Mammary epithelial cell (primary cell): ENCODE measurements at regions of chr1 and their contacts with region 1.

Region 1: GRCh38 chr1:205485338-205486228 is 18.9 kb upstream of the CDK18 start:
- DNase-seq: peak; percentile 56
- H3K4me3 ChIP-seq: no peak overlapping the region
- H3K27ac ChIP-seq: no peak overlapping the region
- H3K4me1 ChIP-seq: peaks cover 16% of the 10 kb centered on the region
- H3K27me3 ChIP-seq: no peaks in the 10 kb centered on the region
- CTCF ChIP-seq: peak; percentile 76 to 96

Region 2: GRCh38 chr1:205335643-205336091 is 149.9 kb before region 1 on chr1:
- CTCF ChIA-PET with region 1: interaction called, 8 read pairs
- dilution Hi-C with region 1: no loop called
- in situ Hi-C with region 1: loop called in 1 of 2 experiments (anchors 10 kb)
- intact Hi-C with region 1: loop called (anchors 1 kb)
- DNase-seq: peak; percentile 66
- H3K4me3 ChIP-seq: no peak overlapping the region
- H3K27ac ChIP-seq: no peak overlapping the region
- H3K4me1 ChIP-seq: peaks cover under 1% of the 10 kb centered on the region
- H3K27me3 ChIP-seq: no peaks in the 10 kb centered on the region
- CTCF ChIP-seq: peak; percentile 96 to 99

Region 3: GRCh38 chr1:205396967-205397616 is 88.5 kb before region 1 on chr1:
- CTCF ChIA-PET with region 1: interaction called, 18 read pairs
- dilution Hi-C with region 1: no loop called
- in situ Hi-C with region 1: loop called (anchors 10 kb)
- intact Hi-C with region 1: loop called (anchors 1 kb)
- DNase-seq: peak; percentile 52
- H3K4me3 ChIP-seq: no peak overlapping the region
- H3K27ac ChIP-seq: no peak overlapping the region
- H3K4me1 ChIP-seq: no peaks in the 10 kb centered on the region
- H3K27me3 ChIP-seq: no peaks in the 10 kb centered on the region
- CTCF ChIP-seq: peak; percentile 77 to 86

Region 4: DNA sequence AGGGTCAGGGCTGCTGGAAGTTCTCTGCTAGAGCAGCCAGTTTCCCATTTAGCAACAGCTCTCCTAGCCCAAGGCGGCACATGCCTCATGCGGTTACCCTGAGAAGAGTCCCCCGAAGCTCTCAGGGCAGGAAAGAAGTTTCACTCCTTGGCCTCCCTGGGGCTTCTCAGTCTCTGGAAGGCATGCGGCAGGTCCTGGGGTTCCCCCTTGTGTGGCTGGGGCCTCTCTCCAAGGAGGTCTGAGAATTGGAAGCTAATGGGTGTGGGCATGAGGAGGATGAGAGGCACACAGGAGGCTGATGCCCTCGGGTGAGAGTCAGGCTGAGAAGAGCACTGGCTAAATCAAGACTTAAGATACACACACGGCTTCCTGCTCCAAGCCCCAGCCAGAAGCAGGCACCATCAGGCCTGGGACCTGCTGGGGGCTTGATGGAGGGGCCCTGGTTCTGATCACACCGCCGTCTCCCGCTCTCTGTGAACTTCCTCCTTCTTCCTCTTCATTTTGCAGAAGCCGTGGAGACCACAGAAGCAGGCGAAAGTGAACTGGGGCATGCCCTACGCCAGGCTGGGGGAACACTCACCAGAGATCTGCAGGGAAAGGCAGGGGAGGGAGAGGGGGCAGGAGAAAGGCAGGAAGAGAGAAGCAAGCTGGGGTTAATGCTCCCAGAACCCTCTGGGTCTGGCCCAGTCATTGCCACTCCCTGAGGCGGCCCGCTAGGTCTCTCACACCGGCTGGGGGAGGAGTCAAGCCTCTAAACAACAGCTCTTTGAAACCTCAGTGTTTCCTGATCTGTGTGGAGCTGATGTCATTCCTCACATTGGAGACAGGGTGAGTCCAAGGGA is 44.9 kb before region 1 on chr1:
- CTCF ChIA-PET with region 1: interaction called, 6 read pairs
- dilution Hi-C with region 1: no loop called
- in situ Hi-C with region 1: loop called in 1 of 2 experiments (anchors 5 kb)
- intact Hi-C with region 1: loop called (anchors 2 kb)
- DNase-seq: peak; percentile 98
- H3K4me3 ChIP-seq: no peak overlapping the region
- H3K27ac ChIP-seq: peak overlapping the region; percentile 80
- H3K4me1 ChIP-seq: peaks cover 54% of the 10 kb centered on the region
- H3K27me3 ChIP-seq: no peaks in the 10 kb centered on the region
- CTCF ChIP-seq: no peak

Region 5: DNA sequence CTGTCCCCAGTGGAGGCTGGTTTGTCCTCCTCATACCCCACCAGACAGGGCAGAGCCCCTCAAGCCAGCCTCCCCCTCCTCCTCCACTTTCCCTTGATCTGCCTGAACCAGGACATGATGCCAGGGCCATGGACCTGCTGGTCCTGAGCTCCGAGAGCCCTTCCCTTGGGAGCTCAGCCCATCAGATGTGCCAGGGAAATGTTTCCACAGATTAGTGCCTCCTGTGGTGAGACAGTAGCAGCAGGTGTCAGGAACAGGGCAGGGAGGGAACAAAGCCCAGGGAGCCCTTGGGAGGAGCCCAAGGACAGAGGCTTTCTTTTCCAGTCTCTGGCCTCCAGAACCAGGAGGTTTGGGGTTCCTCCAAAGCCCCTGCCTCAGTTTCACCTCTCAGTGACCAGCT is 342.0 kb after region 1 on chr1:
- CTCF ChIA-PET with region 1: no interaction called
- dilution Hi-C with region 1: no loop called
- in situ Hi-C with region 1: no loop called
- intact Hi-C with region 1: no loop called
- DNase-seq: no peak
- H3K4me3 ChIP-seq: no peak overlapping the region
- H3K27ac ChIP-seq: no peak overlapping the region
- H3K4me1 ChIP-seq: no peaks in the 10 kb centered on the region
- H3K27me3 ChIP-seq: no peaks in the 10 kb centered on the region
- CTCF ChIP-seq: peak; percentile 6 to 14

Region 6: DNA sequence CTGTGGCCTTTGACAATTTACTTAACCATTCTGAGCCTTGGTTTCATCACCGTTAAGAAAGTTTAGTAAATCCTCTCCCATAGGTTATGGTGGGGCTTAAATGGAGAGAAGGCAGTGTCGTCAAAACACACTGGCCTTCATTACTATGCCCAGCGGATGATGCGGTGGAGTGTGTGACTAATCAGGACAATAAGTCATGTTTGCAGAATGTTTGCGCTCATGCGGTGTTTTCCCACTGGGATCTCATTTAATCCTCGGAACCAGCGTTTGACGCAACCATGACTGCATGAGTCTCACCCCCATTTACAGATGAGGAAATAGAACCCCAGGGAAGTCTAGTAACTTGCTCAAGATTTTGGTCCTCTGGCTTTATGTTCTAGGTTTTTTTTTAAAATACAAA is 440.1 kb after region 1 on chr1:
- CTCF ChIA-PET with region 1: no interaction called
- dilution Hi-C with region 1: no loop called
- in situ Hi-C with region 1: no loop called
- intact Hi-C with region 1: no loop called
- DNase-seq: peak; percentile 19
- H3K4me3 ChIP-seq: no peak overlapping the region
- H3K27ac ChIP-seq: no peak overlapping the region
- H3K4me1 ChIP-seq: no peaks in the 10 kb centered on the region
- H3K27me3 ChIP-seq: peaks cover 8% of the 10 kb centered on the region
- CTCF ChIP-seq: no peak

Region 7: DNA sequence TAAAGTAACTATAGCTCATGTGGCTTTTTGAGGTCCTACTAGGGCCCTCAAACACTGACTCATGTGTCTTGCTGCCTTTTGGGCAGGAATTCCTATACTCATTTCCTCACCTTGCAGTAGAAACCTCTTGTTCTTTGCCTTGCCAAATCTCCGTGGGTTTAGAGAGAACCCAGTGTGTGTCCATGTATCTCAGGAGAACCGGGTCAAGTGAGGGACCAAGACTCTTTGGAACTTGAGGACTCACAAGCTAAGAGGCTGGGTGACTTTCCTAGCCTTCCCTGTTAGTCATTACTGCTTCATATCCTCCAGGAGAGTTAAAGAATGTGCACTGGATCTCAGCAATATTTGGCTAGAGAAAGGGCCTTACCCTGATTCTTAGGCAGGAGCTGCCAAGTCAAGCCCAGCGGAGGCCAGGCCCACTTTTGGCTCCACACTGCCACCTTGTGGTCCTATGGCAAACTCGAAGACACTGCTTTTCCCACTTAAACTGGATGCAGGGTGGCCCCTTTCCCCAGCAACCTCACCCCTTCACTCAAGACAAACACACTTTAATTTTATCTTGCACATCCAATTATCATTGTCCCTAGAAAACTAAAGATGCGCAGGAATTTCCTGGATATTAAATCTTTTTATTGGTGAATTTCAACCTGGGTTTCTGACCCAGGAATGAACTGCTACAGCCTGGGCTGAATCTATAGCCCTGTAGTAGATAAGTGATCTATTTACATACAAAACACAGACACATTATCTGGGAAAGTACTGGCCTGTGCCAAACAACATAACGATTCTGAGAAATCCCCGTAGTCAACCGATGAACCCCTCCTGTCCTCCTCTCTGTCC is 621.0 kb after region 1 on chr1:
- CTCF ChIA-PET with region 1: no interaction called
- dilution Hi-C with region 1: no loop called
- in situ Hi-C with region 1: no loop called
- intact Hi-C with region 1: no loop called
- DNase-seq: peak; percentile 72
- H3K4me3 ChIP-seq: no peak overlapping the region
- H3K27ac ChIP-seq: no peak overlapping the region
- H3K4me1 ChIP-seq: peaks cover 11% of the 10 kb centered on the region
- H3K27me3 ChIP-seq: no peaks in the 10 kb centered on the region
- CTCF ChIP-seq: peak; percentile 90 to 96